PC-9 (cell line): ENCODE measurements at regions of chr20 and their contacts with region 1.

Region 1: GRCh38 chr20:34180460-34181120 is 60.6 kb upstream of the ASIP start:
- DNase-seq: peak; percentile 76
- H3K4me3 ChIP-seq: no peak overlapping the region
- H3K27ac ChIP-seq: peak overlapping the region; percentile 58
- H3K4me1 ChIP-seq: peaks cover 27% of the 10 kb centered on the region; the same call in 1 of the 2 replicates
- H3K27me3 ChIP-seq: peaks cover 2% of the 10 kb centered on the region; the same call in 1 of the 2 replicates
- CTCF ChIP-seq: no peak

Region 2: DNA sequence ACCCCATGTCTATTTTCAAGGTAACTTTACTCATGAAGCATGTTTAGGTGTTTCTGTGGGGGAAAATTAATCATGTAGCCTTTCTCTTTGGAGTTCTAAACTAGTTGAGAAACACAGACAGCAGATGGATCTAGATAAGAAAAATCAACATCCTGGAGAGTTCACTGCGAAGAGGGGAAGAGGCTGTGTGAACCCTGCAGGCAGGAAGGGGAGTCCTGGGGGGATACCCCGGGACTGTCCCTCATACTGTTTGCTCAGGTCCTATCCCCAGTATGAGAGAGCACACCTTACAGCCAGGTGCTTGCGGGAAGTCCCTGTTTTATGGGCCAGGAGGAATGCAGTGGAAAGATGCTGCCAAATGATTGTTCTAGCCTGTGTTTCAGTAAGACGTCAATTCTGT is 336.7 kb before region 1 on chr20:
- CTCF ChIA-PET with region 1: no interaction called
- POLR2A ChIA-PET with region 1: no interaction called
- intact Hi-C with region 1: no loop called
- DNase-seq: peak in 1 of 2 experiments; percentile 53
- H3K4me3 ChIP-seq: no peak overlapping the region
- H3K27ac ChIP-seq: peak overlapping the region; percentile 33; the same call in 1 of the 2 replicates
- H3K4me1 ChIP-seq: peaks cover 16% of the 10 kb centered on the region
- H3K27me3 ChIP-seq: no peaks in the 10 kb centered on the region
- CTCF ChIP-seq: no peak

Region 3: DNA sequence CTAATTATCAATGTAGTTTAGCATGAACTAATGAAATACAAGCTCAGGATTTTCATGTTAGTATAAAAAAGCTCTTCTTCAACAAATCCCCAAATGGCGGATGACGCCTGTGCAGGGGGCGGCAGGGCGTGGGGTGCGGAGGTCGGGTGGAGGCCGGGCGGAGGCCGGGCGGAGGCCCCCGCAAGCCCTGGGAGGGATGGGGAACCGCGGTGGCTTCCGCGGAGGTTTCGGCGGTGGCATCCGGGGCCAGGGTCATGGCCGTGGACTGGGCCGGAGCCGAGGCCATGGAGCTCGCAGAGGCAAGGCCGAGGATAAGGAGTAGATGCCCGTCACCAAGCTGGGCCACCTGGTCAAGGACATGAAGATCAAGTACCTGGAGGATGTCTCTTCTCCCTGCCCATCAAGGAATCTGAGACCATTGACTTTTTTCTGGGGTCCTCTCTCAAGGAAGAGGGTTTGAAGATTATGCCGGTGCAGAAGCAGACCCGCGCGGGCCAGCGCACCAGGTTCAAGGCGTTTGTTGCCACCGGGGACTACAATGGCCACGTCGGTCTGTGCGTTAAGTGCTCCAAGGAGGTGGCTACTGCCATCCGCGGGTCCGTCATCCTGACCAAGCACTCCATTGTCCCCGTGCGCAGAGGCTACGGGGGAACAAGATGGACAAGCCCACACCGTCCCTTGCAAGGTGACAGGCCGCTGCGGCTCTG is 58.2 kb before region 1 on chr20:
- CTCF ChIA-PET with region 1: no interaction called
- POLR2A ChIA-PET with region 1: interaction called, 28 read pairs
- intact Hi-C with region 1: no loop called
- DNase-seq: no peak
- H3K4me3 ChIP-seq: no peak overlapping the region
- H3K27ac ChIP-seq: no peak overlapping the region
- H3K4me1 ChIP-seq: peaks cover 4% of the 10 kb centered on the region
- H3K27me3 ChIP-seq: no peaks in the 10 kb centered on the region
- CTCF ChIP-seq: no peak

Region 4: GRCh38 chr20:34165018-34165619 is 15.5 kb before region 1 on chr20:
- CTCF ChIA-PET with region 1: no interaction called
- POLR2A ChIA-PET with region 1: interaction called, 10 read pairs
- intact Hi-C with region 1: no loop called
- DNase-seq: no peak
- H3K4me3 ChIP-seq: no peak overlapping the region
- H3K27ac ChIP-seq: no peak overlapping the region
- H3K4me1 ChIP-seq: no peaks in the 10 kb centered on the region
- H3K27me3 ChIP-seq: no peaks in the 10 kb centered on the region
- CTCF ChIP-seq: no peak

Region 5: GRCh38 chr20:34199183-34199582 is 18.6 kb after region 1 on chr20:
- CTCF ChIA-PET with region 1: interaction called, 28 read pairs
- POLR2A ChIA-PET with region 1: no interaction called
- intact Hi-C with region 1: no loop called
- DNase-seq: no peak
- H3K4me3 ChIP-seq: no peak overlapping the region
- H3K27ac ChIP-seq: no peak overlapping the region
- H3K4me1 ChIP-seq: no peaks in the 10 kb centered on the region
- H3K27me3 ChIP-seq: no peaks in the 10 kb centered on the region
- CTCF ChIP-seq: no peak

Region 6: GRCh38 chr20:34558320-34559218 is 378.0 kb after region 1 on chr20 and contains the start of gene MAP1LC3A:
- CTCF ChIA-PET with region 1: interaction called, 12 read pairs
- POLR2A ChIA-PET with region 1: no interaction called
- intact Hi-C with region 1: no loop called
- DNase-seq: peak in 1 of 2 experiments; percentile 41
- H3K4me3 ChIP-seq: no peak within 1 kb of the TSS
- H3K27ac ChIP-seq: no peak within 1 kb of the TSS
- H3K4me1 ChIP-seq: no peaks in the 10 kb centered on the region
- H3K27me3 ChIP-seq: no peaks in the 10 kb centered on the region
- CTCF ChIP-seq: no peak
- total RNA-seq, gene MAP1LC3A: not detected in 2 replicates

Region 7: GRCh38 chr20:34600892-34601653 is 420.5 kb after region 1 on chr20:
- CTCF ChIA-PET with region 1: no interaction called
- POLR2A ChIA-PET with region 1: interaction called, 23 read pairs
- intact Hi-C with region 1: no loop called
- DNase-seq: no peak
- H3K4me3 ChIP-seq: no peak overlapping the region
- H3K27ac ChIP-seq: no peak overlapping the region
- H3K4me1 ChIP-seq: no peaks in the 10 kb centered on the region
- H3K27me3 ChIP-seq: no peaks in the 10 kb centered on the region
- CTCF ChIP-seq: no peak

Region 8: DNA sequence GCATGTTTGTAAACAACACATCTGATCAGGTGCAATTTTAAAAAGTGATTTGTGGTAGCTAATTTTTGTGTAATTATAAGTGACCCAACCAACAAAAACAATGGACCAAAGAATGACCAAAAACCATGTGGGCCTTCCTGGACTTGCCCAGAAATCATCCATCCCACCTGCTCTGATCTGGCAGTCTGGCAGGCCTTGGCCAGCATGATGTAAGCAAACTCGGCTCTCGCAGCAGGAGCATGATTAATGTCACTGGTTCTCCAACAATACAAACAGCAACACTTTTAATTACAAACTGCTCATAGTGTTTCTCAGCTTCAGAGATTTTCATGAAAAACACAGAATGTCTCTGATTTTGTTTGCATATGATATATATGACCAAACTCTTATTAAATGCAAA is 539.7 kb after region 1 on chr20:
- CTCF ChIA-PET with region 1: no interaction called
- POLR2A ChIA-PET with region 1: no interaction called
- intact Hi-C with region 1: no loop called
- DNase-seq: no peak
- H3K4me3 ChIP-seq: no peak overlapping the region
- H3K27ac ChIP-seq: no peak overlapping the region
- H3K4me1 ChIP-seq: no peaks in the 10 kb centered on the region
- H3K27me3 ChIP-seq: no peaks in the 10 kb centered on the region
- CTCF ChIP-seq: no peak